Lower leg skin (tissue), 4 donors: ENCODE measurements at regions of chr14 and their contacts with region 1.

Region 1: GRCh38 chr14:34023824-34024767 is 73.2 kb upstream of the EGLN3 start:
- DNase-seq: no peak
- H3K4me3 ChIP-seq: no peak overlapping the region
- CTCF ChIP-seq: peak in 1 of 3 donors; percentile 11
- POLR2A ChIP-seq: no peak

Region 2: DNA sequence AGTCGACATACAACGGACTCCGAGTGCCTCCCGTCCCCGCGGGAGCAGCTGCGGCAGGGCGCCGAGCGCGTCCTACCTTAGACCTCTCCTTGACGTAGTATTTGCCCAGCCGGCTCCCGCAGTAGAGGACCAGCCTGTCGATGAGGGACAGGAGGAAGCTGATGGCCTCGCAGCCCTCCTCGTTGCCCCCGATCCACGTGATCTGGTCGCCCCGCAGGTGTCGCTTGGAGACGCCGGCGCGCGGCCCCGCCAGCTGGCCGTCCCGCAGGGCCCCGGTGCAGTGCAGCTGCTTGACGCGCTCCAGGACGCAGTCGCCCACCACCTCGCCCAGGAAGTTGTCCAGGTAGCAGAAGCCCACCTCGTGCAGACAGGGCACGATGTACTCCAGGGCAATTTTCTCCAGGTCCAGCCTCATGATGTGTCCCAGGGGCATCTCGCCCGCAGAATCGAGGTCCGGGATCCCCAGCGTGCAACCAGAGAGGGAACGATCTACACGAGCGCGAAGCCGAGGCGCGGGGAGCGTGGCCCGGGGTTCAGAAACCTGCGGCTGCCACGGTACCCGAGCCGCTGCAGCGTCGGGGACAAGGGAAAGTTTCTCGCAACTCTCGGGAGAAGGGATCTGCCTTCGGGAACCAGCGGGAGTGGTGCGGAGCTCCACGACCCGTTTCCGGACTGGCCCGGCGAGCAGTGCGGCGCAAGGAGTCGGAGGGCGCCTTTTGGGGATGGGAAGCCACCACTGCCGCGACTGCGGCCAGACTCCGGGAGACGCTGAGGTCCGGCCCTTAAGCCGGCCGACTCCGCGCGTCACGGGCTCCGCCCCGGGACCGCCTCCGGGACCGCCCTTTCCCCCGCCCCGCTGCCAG is 73.5 kb before region 1 on chr14 and contains the start of gene EGLN3:
- intact Hi-C with region 1: loop called (anchors 10 kb)
- DNase-seq: peak; percentile 84 to 97
- H3K4me3 ChIP-seq: peak within 1 kb of the TSS; percentile 66
- CTCF ChIP-seq: no peak
- POLR2A ChIP-seq: peak in 1 of 2 donors; percentile 53
- total RNA-seq, gene EGLN3: 161 to 299 (median 167) TPM

Region 3: GRCh38 chr14:34365309-34365915 is 341.3 kb after region 1 on chr14:
- intact Hi-C with region 1: no loop called
- DNase-seq: no peak
- H3K4me3 ChIP-seq: no peak overlapping the region
- CTCF ChIP-seq: no peak
- POLR2A ChIP-seq: no peak